Calu3 (cell line): ENCODE measurements at regions of chr5 and their contacts with region 1.

Region 1: GRCh38 chr5:14727428-14727865 is 62.9 kb downstream of the OTULIN start:
- DNase-seq: peak; percentile 88
- H3K4me3 Mint-ChIP-seq: no peak overlapping the region
- H3K27ac Mint-ChIP-seq: no peak overlapping the region
- H3K4me1 Mint-ChIP-seq: peaks cover 24% of the 10 kb centered on the region
- H3K27me3 Mint-ChIP-seq: no peaks in the 10 kb centered on the region
- CTCF ChIP-seq: peak; percentile 95

Region 2: GRCh38 chr5:14809369-14810155 is 82.1 kb after region 1 on chr5:
- CTCF ChIA-PET with region 1: no interaction called
- intact Hi-C with region 1: loop called (anchors 2 kb)
- DNase-seq: peak; percentile 63
- H3K4me3 Mint-ChIP-seq: peak overlapping the region; percentile 62
- H3K27ac Mint-ChIP-seq: peak overlapping the region; percentile 87
- H3K4me1 Mint-ChIP-seq: peaks cover 38% of the 10 kb centered on the region
- H3K27me3 Mint-ChIP-seq: no peaks in the 10 kb centered on the region
- CTCF ChIP-seq: no peak

Region 3: GRCh38 chr5:14871210-14872069 is 144.0 kb after region 1 on chr5 and contains the start of gene ANKH:
- CTCF ChIA-PET with region 1: no interaction called
- intact Hi-C with region 1: loop called (anchors 1 kb)
- DNase-seq: peak; percentile 88
- H3K4me3 Mint-ChIP-seq: peak within 1 kb of the TSS; percentile 70
- H3K27ac Mint-ChIP-seq: peak within 1 kb of the TSS; percentile 5
- H3K4me1 Mint-ChIP-seq: peaks cover 22% of the 10 kb centered on the region
- H3K27me3 Mint-ChIP-seq: no peaks in the 10 kb centered on the region
- CTCF ChIP-seq: no peak
- total RNA-seq, gene ANKH: 42.1 and 53.2 TPM in 2 replicates

Region 4: DNA sequence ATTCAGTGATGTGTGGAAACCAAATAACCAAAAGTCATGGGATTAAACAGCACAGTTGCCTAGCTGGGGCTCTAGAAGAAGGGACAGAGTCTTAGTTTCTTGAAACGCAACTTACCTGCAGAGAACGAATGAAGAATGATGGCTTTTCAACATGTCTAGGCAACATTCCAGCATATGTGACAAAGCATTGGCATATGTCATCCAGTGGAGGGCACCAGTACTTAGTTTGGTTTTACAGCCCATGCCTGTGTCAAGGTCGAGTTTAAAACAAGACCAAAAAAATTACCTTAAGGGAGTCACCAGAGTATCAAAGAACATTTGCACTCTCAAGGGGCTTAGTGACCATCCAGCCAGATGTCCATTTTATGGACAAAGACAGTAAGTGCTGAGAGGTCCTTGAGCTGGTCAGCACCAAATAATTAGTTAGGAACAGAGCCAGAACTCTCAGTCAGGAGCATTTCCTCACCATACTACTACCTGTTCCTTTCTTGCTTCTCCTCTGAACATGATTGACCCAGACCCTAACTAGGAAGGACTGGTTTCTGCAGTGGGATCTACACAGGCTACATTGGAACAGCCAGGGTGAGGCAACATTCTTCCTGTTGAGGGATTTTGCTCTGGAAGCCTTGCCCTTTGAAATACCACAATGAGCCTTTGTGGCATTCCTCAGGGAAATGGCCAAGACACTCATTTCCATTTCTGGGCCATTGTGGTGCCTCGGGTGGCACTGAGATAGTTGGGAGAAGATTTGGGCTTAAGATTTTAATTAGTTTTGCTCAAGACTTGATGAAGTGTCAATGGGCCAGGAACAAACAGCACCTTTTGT is 219.6 kb after region 1 on chr5:
- CTCF ChIA-PET with region 1: no interaction called
- intact Hi-C with region 1: loop called (anchors 2 kb)
- DNase-seq: peak; percentile 30
- H3K4me3 Mint-ChIP-seq: no peak overlapping the region
- H3K27ac Mint-ChIP-seq: no peak overlapping the region
- H3K4me1 Mint-ChIP-seq: peaks cover 16% of the 10 kb centered on the region
- H3K27me3 Mint-ChIP-seq: no peaks in the 10 kb centered on the region
- CTCF ChIP-seq: peak; percentile 31

Region 5: GRCh38 chr5:15013654-15014463 is 286.4 kb after region 1 on chr5:
- CTCF ChIA-PET with region 1: interaction called, 5 read pairs
- intact Hi-C with region 1: loop called (anchors 1 kb)
- DNase-seq: no peak
- H3K4me3 Mint-ChIP-seq: no peak overlapping the region
- H3K27ac Mint-ChIP-seq: no peak overlapping the region
- H3K4me1 Mint-ChIP-seq: peaks cover 52% of the 10 kb centered on the region
- H3K27me3 Mint-ChIP-seq: no peaks in the 10 kb centered on the region
- CTCF ChIP-seq: peak; percentile 63